ENCODE measurements at regions of chr1 and their contacts with region 1.

Region 1: GRCh38 chr1:8727809-8728213 is 89.6 kb downstream of the RERE start:
- DNase-seq: no peak
- ATAC-seq: no peak
- H3K4me3 Mint-ChIP-seq: no peak overlapping the region
- H3K27ac Mint-ChIP-seq: no peak overlapping the region
- H3K4me1 Mint-ChIP-seq: peaks cover 15% of the 10 kb centered on the region
- H3K27me3 Mint-ChIP-seq: no peaks in the 10 kb centered on the region
- CTCF ChIP-seq: no peak

Region 2: GRCh38 chr1:8554956-8555534 is 172.8 kb before region 1 on chr1:
- CTCF ChIA-PET with region 1: interaction called, 147 read pairs
- POLR2A ChIA-PET with region 1: no interaction called
- intact Hi-C with region 1: loop called (anchors 2 kb)
- DNase-seq: peak; percentile 37
- ATAC-seq: peak; percentile 57
- H3K4me3 Mint-ChIP-seq: no peak overlapping the region
- H3K27ac Mint-ChIP-seq: peak overlapping the region; percentile 60
- H3K4me1 Mint-ChIP-seq: peaks cover 34% of the 10 kb centered on the region
- H3K27me3 Mint-ChIP-seq: no peaks in the 10 kb centered on the region
- CTCF ChIP-seq: no peak

Region 3: GRCh38 chr1:8571200-8571984 is 156.4 kb before region 1 on chr1:
- CTCF ChIA-PET with region 1: interaction called, 147 read pairs
- POLR2A ChIA-PET with region 1: no interaction called
- intact Hi-C with region 1: no loop called
- DNase-seq: no peak
- ATAC-seq: no peak
- H3K4me3 Mint-ChIP-seq: no peak overlapping the region
- H3K27ac Mint-ChIP-seq: no peak overlapping the region
- H3K4me1 Mint-ChIP-seq: peaks cover 5% of the 10 kb centered on the region
- H3K27me3 Mint-ChIP-seq: no peaks in the 10 kb centered on the region
- CTCF ChIP-seq: peak; percentile 10

Region 4: GRCh38 chr1:8586438-8586837 is 141.4 kb before region 1 on chr1:
- CTCF ChIA-PET with region 1: interaction called, 17 read pairs
- POLR2A ChIA-PET with region 1: no interaction called
- intact Hi-C with region 1: no loop called
- DNase-seq: no peak
- ATAC-seq: no peak
- H3K4me3 Mint-ChIP-seq: no peak overlapping the region
- H3K27ac Mint-ChIP-seq: no peak overlapping the region
- H3K4me1 Mint-ChIP-seq: peaks cover 26% of the 10 kb centered on the region
- H3K27me3 Mint-ChIP-seq: no peaks in the 10 kb centered on the region
- CTCF ChIP-seq: no peak

Region 5: GRCh38 chr1:8651236-8651890 is 76.4 kb before region 1 on chr1:
- CTCF ChIA-PET with region 1: no interaction called
- POLR2A ChIA-PET with region 1: no interaction called
- intact Hi-C with region 1: no loop called
- DNase-seq: no peak
- ATAC-seq: peak; percentile 57
- H3K4me3 Mint-ChIP-seq: no peak overlapping the region
- H3K27ac Mint-ChIP-seq: peak overlapping the region; percentile 76
- H3K4me1 Mint-ChIP-seq: peaks cover 50% of the 10 kb centered on the region
- H3K27me3 Mint-ChIP-seq: no peaks in the 10 kb centered on the region
- CTCF ChIP-seq: no peak

Region 6: DNA sequence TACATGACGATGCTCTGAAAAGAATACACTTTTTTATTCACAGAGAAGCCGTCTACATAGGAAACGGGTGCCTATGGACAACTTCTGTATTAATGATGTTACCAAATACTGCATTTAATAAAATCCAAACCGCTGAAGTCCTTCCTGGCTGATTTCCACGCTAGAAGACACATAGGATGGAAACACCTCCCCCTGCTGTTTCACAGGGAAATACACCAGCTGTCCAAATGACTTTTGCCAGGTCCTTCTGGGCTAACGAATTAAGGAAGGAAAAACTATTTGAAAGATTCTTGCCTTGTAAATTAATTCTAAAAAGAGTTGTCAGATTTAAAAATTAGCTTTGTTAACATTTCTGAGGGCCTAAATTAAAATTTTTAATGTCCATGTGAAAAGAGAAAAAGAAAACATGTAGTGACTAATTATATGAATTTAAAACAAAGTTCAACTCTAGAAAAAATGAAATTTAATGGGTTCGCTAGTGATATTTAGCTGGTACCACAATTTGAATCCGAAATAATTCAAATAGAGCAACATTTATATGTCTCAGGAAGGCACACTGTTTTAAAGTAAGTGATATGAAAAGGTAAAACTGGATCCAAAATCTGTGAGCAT is 56.4 kb before region 1 on chr1:
- CTCF ChIA-PET with region 1: interaction called, 15 read pairs
- POLR2A ChIA-PET with region 1: no interaction called
- intact Hi-C with region 1: no loop called
- DNase-seq: peak; percentile 18
- ATAC-seq: no peak
- H3K4me3 Mint-ChIP-seq: no peak overlapping the region
- H3K27ac Mint-ChIP-seq: no peak overlapping the region
- H3K4me1 Mint-ChIP-seq: peaks cover 44% of the 10 kb centered on the region
- H3K27me3 Mint-ChIP-seq: no peaks in the 10 kb centered on the region
- CTCF ChIP-seq: peak; percentile 81

Region 7: DNA sequence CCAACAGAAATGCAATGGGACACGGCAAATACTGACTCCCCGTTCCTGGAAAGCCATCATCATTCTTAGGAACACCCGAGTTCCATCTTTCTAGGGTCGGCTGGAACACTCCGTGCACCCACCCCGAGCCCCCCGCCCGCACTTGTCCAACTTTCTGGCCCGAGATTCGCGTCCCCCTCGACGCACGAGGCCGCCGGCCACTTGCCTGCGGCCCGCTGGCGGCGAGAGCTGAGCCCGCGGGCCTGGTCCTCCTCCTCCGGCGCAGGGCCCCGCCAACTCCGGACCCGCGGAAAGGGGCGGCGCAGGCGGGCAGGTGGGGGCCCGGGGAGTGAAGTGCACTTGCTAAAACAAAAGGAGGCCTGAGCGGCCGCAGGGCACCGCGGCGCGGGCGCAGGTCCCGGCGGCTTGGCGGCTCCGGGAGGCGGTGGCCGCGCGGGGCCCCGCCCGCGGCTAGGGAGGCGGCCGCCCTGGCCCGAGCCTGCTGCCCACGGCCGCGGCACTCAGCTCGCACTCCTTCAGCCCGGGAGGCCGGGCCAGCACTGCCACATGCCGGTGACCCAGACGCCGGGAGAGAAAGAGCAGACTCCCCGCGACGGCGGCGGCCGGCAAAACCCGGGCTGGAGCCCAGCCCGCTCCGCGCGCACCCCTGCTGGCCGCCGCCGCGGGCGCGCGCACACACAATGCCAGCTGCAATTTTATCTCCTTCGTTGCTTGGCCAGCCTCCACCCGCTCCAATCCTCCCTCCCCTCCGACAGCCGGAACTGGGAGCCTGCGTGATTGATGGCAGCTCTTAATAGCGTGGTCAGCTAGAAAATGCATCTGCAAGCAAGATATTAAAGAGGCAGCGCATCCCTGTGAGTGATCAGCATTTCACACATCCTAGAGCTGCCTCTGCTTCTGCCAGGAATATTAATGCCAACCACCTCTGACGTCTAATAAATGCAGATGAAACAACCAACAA is 24.7 kb before region 1 on chr1:
- CTCF ChIA-PET with region 1: interaction called, 15 read pairs
- POLR2A ChIA-PET with region 1: interaction called, 4 read pairs
- intact Hi-C with region 1: no loop called
- DNase-seq: peak; percentile 75
- ATAC-seq: peak; percentile 68
- H3K4me3 Mint-ChIP-seq: peak overlapping the region; percentile 88
- H3K27ac Mint-ChIP-seq: peak overlapping the region; percentile 70
- H3K4me1 Mint-ChIP-seq: peaks cover 31% of the 10 kb centered on the region
- H3K27me3 Mint-ChIP-seq: peaks cover 32% of the 10 kb centered on the region
- CTCF ChIP-seq: no peak

Region 8: GRCh38 chr1:8747879-8748825 is 20.3 kb after region 1 on chr1:
- CTCF ChIA-PET with region 1: interaction called, 11 read pairs
- POLR2A ChIA-PET with region 1: no interaction called
- intact Hi-C with region 1: no loop called
- DNase-seq: no peak
- ATAC-seq: no peak
- H3K4me3 Mint-ChIP-seq: no peak overlapping the region
- H3K27ac Mint-ChIP-seq: no peak overlapping the region
- H3K4me1 Mint-ChIP-seq: peaks cover 18% of the 10 kb centered on the region
- H3K27me3 Mint-ChIP-seq: no peaks in the 10 kb centered on the region
- CTCF ChIP-seq: no peak